ENCODE measurements at regions of chr20 and their contacts with region 1.

Region 1: GRCh38 chr20:23995905-23996666 is 7.5 kb upstream of the GGTLC1 start:
- DNase-seq: peak; percentile 64
- H3K4me3 ChIP-seq: no peak overlapping the region
- H3K27ac ChIP-seq: no peak overlapping the region
- H3K4me1 ChIP-seq: no peaks in the 10 kb centered on the region
- CTCF ChIP-seq: peak; percentile 83

Region 2: GRCh38 chr20:23794841-23795240 is 201.2 kb before region 1 on chr20:
- CTCF ChIA-PET with region 1: no interaction called
- POLR2A ChIA-PET with region 1: no interaction called
- intact Hi-C with region 1: loop called (anchors 5 kb)
- DNase-seq: no peak
- H3K4me3 ChIP-seq: no peak overlapping the region
- H3K27ac ChIP-seq: no peak overlapping the region
- H3K4me1 ChIP-seq: no peaks in the 10 kb centered on the region
- CTCF ChIP-seq: no peak

Region 3: DNA sequence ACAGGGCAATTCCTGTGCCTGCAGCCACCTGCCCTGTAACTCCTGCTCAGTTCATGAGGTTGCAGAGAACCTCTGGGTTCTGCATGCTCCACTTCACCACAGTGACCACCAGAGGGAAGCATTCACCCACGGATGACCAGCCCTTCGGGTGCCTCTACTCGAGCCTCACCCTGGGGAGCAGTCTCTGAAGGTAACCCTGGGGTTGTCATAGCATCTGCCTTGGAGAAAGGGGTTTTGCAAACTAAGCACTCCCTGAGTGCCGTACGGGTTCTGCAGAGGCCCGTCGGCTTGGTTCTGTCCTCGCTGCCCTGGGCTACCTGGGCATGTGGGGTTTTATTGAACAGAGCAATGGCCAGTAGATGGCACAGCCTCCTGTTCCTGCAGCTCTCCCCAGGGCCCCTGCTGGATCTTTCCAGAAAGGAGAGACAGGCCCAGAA is 106.3 kb before region 1 on chr20:
- CTCF ChIA-PET with region 1: no interaction called
- POLR2A ChIA-PET with region 1: no interaction called
- intact Hi-C with region 1: loop called (anchors 5 kb)
- DNase-seq: peak; percentile 37
- H3K4me3 ChIP-seq: no peak overlapping the region
- H3K27ac ChIP-seq: no peak overlapping the region
- H3K4me1 ChIP-seq: no peaks in the 10 kb centered on the region
- CTCF ChIP-seq: peak; percentile 69

Region 4: DNA sequence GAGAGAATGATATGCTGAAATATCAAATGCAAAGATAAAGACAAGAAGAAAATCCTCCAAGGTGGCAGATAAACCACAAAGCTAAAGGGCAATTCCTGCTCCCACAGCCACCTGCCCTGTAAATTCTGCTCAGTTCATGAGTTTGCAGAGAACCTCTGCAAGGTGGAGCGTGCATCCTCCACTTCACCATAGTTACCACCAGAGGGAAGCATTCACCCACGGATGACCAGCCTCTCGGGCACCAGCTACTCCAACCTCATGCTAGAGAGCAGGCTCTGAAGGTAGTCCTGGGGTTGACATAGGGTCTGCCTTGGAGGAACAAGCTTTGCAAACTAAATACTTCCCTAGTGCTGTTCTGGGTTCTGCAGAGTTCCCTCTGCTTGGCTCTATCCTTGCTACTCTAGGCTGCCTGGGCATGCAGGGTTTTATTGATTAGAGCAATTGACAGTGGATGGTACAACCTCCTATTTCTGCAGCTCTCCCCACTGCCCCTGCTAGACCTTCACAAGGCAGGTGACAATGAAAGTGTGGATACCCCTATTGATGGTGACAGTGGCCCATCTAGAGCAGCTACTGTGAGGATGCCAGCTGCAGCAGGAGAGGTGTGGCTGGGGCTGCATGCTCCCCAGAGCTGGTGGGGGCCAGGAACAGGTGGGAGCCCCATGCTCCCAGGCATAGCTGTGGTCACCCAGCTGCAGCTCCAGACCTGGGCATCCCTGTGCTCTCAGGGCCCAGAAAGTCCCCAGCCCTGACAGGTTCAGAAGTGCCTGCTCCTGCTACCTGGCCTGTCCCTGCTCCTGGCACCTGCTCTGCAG is 58.6 kb before region 1 on chr20:
- CTCF ChIA-PET with region 1: interaction called, 5 read pairs
- POLR2A ChIA-PET with region 1: no interaction called
- intact Hi-C with region 1: loop called (anchors 5 kb)
- DNase-seq: peak; percentile 41
- H3K4me3 ChIP-seq: no peak overlapping the region
- H3K27ac ChIP-seq: no peak overlapping the region
- H3K4me1 ChIP-seq: no peaks in the 10 kb centered on the region
- CTCF ChIP-seq: peak; percentile 76

Region 5: DNA sequence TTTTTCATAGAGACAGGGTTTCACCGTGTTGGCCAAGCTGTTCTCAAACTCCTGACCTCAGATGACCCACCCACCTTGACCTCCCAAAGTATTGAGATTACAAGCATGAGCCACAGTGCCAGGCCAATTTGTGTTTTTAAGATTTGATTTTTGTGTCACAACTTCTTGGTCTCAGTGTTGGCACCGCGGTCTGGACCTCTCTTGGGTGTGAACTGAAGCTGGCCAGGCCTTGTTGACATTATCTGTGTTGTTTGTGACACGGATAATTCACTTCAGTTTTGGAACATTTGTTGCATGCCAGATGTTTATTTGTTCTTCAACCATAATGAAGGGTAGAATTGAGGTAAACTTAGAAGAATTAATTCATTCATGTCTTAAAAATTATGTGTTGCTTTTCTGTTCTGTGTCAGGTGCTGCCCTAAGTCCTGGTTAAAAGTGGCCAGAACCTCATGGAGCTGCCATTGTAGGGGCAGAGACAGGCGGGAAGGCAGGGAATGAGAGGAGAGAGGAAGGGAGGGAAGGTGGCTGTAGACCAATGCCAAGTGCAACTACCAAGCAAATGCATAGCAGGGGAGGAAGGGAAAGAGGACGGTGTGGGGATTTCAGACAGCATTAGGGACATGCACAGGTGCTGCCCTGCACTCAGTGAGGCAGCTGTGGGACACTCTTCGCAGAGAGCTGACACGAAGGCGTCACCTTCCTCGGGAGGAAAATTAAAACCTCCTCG is 28.7 kb before region 1 on chr20:
- CTCF ChIA-PET with region 1: no interaction called
- POLR2A ChIA-PET with region 1: no interaction called
- intact Hi-C with region 1: no loop called
- DNase-seq: no peak
- H3K4me3 ChIP-seq: no peak overlapping the region
- H3K27ac ChIP-seq: no peak overlapping the region
- H3K4me1 ChIP-seq: no peaks in the 10 kb centered on the region
- CTCF ChIP-seq: no peak

Measured in OCI-LY7 (cell line).